ENCODE measurements at regions of chr9 and their contacts with region 1.

Region 1: DNA sequence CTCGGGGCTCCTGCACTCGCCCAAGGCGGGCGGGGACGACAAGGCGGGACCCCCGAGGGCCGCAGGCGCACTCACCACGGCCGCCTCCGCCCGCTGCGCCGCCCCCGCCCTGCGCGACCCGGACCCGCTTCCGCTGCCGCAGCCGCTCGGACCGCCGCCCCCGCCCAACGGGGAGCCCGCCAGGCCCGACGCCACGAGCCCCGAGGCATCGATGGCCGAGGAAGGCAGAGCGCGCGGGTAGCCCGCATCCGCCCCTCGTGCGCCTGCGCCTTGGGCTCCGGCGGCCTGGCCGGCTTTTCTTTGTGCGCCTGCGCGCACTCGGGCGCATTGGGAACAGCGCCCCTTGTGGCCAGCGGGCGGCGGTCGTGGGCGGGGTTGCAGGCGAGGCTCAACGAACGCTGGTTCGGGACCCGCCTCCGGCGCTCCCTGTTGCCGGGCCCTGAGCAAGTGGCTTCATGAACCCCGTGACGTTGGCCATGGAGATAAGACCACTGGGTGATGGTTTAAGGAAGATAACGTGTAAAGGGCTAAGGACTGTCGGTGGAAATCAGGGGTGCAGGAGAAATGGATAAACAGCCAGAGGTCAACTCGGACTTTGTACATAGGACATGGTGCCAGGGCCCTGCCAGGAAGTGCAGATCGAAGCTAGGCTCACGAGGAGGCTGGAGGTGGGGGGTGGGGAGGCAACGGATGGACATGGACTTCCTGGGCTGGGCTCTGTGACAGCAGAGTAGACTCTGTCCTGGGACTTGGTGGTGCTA is at the starts of genes C8G and FBXW5:
- DNase-seq: peak; percentile 93 to 97 (median 95)
- H3K4me3 ChIP-seq: peak within 1 kb of the TSS; percentile 92
- H3K27ac ChIP-seq: peak within 1 kb of the TSS; percentile 4 to 73
- H3K4me1 ChIP-seq: peaks cover 9% of the 10 kb centered on the region
- H3K27me3 ChIP-seq: no peaks in the 10 kb centered on the region
- CTCF ChIP-seq: peak; percentile 99 to 100 (median 99)
- EP300 ChIP-seq: no peak
- POLR2A ChIP-seq: peak; percentile 47
- total RNA-seq, gene C8G: 1.00 TPM in 1 of 7 donors, not detected in the others
- total RNA-seq, gene FBXW5: 49.4 to 75.5 (median 60.5) TPM

Region 2: DNA sequence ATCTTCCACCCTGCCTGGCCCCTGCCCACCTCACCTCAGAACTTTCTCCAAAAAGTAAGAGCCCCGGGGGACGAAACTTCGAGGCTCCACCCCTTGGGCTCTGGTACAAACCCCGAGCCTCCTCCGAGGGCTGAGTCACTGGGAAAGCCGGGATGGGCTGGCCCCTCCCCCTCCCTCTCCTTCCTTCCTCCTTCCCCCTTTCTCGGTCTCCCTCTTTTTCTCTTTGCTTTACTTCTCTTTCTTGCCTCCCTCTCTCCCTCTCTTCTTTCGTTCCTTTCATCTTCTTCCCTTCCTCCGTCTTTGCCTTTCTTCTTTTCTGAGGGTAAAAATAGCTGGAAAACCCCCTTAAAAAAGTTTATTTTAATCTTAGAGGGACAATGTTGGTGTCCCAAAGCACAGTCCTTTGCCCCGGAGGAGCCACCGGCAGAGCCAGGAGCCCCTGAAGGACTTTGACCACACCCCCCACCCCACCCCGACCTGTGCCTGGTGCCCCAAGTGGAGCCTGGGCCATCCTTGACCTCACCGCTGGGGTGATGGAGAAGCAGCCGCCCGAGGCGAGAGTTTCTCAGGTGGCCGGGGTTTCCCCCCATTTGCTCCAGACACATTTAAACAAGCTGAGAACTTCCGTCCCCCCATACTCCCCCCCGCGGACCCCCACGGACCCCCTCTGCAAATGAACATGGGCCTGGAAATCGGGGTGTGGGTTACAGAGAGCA is 393.1 kb before region 1 on chr9:
- intact Hi-C with region 1: no loop called
- DNase-seq: peak; percentile 80 to 88 (median 82)
- H3K4me3 ChIP-seq: peak overlapping the region; percentile 0
- H3K27ac ChIP-seq: peak overlapping the region in 1 of 2 donors; percentile 30
- H3K4me1 ChIP-seq: peaks cover 15% of the 10 kb centered on the region
- H3K27me3 ChIP-seq: no peaks in the 10 kb centered on the region
- CTCF ChIP-seq: no peak
- EP300 ChIP-seq: no peak
- POLR2A ChIP-seq: no peak

Region 3: DNA sequence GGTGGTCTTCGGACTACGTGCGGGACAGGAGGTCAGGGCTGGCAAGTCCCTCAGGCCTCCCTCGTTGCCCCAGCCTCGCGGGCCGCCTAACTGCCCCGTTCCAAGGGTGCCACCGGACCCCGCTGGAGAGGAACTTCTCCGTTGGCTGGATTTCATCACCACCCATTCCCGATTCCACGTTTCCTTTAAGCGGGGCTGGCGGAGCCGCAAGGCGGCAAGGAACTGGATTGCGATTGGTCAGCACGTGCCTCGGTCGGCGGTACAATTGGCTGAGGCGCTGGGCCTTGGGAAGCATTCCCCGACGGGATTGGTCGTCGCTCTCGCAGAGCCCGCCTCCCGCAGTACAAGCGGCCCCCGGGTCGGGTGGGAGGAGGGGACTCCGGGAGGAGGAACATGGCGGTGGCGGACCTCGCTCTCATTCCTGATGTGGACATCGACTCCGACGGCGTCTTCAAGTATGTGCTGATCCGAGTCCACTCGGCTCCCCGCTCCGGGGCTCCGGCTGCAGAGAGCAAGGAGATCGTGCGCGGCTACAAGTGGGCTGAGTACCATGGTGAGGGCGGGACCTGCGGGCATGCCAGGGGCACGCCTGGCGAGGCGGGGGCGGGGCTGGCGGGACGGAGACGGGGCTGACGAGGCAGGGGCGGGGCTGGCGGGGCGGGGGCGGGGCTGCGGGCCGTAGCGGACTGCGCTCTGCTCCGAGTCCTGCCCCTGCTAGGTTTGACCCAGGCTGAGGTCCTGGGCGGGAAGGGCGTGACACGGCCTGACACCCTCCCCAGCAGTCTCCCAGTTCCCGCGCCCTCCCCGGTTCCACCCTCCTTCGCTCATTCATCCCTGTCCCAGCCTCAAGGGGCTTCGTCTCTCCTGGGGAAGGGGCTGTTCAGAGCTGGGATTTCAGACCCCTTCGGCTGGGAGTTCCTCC is 95.4 kb before region 1 on chr9 and contains the start of gene PHPT1:
- intact Hi-C with region 1: loop called in 1 of 4 experiments (anchors 10 kb)
- DNase-seq: peak; percentile 98 to 99 (median 99)
- H3K4me3 ChIP-seq: peak within 1 kb of the TSS; percentile 51
- H3K27ac ChIP-seq: peak within 1 kb of the TSS; percentile 33 to 86
- H3K4me1 ChIP-seq: peaks cover 13% of the 10 kb centered on the region
- H3K27me3 ChIP-seq: peaks cover 14% of the 10 kb centered on the region
- CTCF ChIP-seq: no peak
- EP300 ChIP-seq: no peak
- POLR2A ChIP-seq: peak; percentile 74
- total RNA-seq, gene PHPT1: 39.2 to 132 (median 86.9) TPM

Region 4: GRCh38 chr9:136885950-136886578 is 58.6 kb before region 1 on chr9 and contains the start of gene TRAF2:
- intact Hi-C with region 1: loop called in 1 of 4 experiments (anchors 5 kb)
- DNase-seq: peak; percentile 96 to 99 (median 98)
- H3K4me3 ChIP-seq: peak within 1 kb of the TSS; percentile 85
- H3K27ac ChIP-seq: peak within 1 kb of the TSS; percentile 37 to 60
- H3K4me1 ChIP-seq: peaks cover 5% of the 10 kb centered on the region
- H3K27me3 ChIP-seq: no peaks in the 10 kb centered on the region
- CTCF ChIP-seq: no peak
- EP300 ChIP-seq: no peak
- POLR2A ChIP-seq: no peak
- total RNA-seq, gene TRAF2: 5.6 to 11.9 (median 10.3) TPM